ENCODE measurements at regions of chr16 and their contacts with region 1.

Region 1: GRCh38 chr16:30065143-30065850 is at the start of gene ALDOA:
- DNase-seq: peak; percentile 99
- ATAC-seq: peak; percentile 87
- H3K4me3 Mint-ChIP-seq: peak within 1 kb of the TSS; percentile 88
- H3K27ac Mint-ChIP-seq: peak within 1 kb of the TSS; percentile 99
- H3K4me1 Mint-ChIP-seq: peaks cover 31% of the 10 kb centered on the region
- H3K27me3 Mint-ChIP-seq: no peaks in the 10 kb centered on the region
- total RNA-seq, gene ALDOA: 2,482 to 3,644 TPM

Region 2: GRCh38 chr16:29790183-29790952 is 274.9 kb before region 1 on chr16 and contains the start of gene KIF22:
- CTCF ChIA-PET with region 1: no interaction called
- POLR2A ChIA-PET with region 1: no interaction called
- intact Hi-C with region 1: loop called in 1 of 2 experiments (anchors 1 kb)
- DNase-seq: peak; percentile 100
- ATAC-seq: peak; percentile 95
- H3K4me3 Mint-ChIP-seq: peak within 1 kb of the TSS; percentile 91
- H3K27ac Mint-ChIP-seq: peak within 1 kb of the TSS; percentile 97
- H3K4me1 Mint-ChIP-seq: peaks cover 30% of the 10 kb centered on the region
- H3K27me3 Mint-ChIP-seq: no peaks in the 10 kb centered on the region
- total RNA-seq, gene KIF22: 153 to 168 TPM

Region 3: GRCh38 chr16:29862884-29863668 is 202.2 kb before region 1 on chr16 and contains the start of gene CDIPT:
- CTCF ChIA-PET with region 1: no interaction called
- POLR2A ChIA-PET with region 1: no interaction called
- intact Hi-C with region 1: loop called in 1 of 2 experiments (anchors 1 kb)
- DNase-seq: peak; percentile 96
- ATAC-seq: peak; percentile 99
- H3K4me3 Mint-ChIP-seq: peak within 1 kb of the TSS; percentile 90
- H3K27ac Mint-ChIP-seq: peak within 1 kb of the TSS; percentile 98
- H3K4me1 Mint-ChIP-seq: peaks cover 18% of the 10 kb centered on the region
- H3K27me3 Mint-ChIP-seq: no peaks in the 10 kb centered on the region
- total RNA-seq, gene CDIPT: 35.1 to 50.0 TPM

Region 4: GRCh38 chr16:30010844-30011713 is 54.2 kb before region 1 on chr16 and contains the start of gene DOC2A:
- CTCF ChIA-PET with region 1: no interaction called
- POLR2A ChIA-PET with region 1: no interaction called
- intact Hi-C with region 1: no loop called
- DNase-seq: peak; percentile 64
- ATAC-seq: peak; percentile 74
- H3K4me3 Mint-ChIP-seq: peak within 1 kb of the TSS; percentile 61
- H3K27ac Mint-ChIP-seq: no peak within 1 kb of the TSS
- H3K4me1 Mint-ChIP-seq: peaks cover 9% of the 10 kb centered on the region
- H3K27me3 Mint-ChIP-seq: peaks cover 18% of the 10 kb centered on the region
- total RNA-seq, gene DOC2A: 0.69 to 1.3 TPM

Region 5: GRCh38 chr16:30025156-30025555 is 40.1 kb before region 1 on chr16:
- CTCF ChIA-PET with region 1: no interaction called
- POLR2A ChIA-PET with region 1: no interaction called
- intact Hi-C with region 1: no loop called
- DNase-seq: no peak
- ATAC-seq: no peak
- H3K4me3 Mint-ChIP-seq: no peak overlapping the region
- H3K27ac Mint-ChIP-seq: no peak overlapping the region
- H3K4me1 Mint-ChIP-seq: peaks cover 10% of the 10 kb centered on the region
- H3K27me3 Mint-ChIP-seq: peaks cover 33% of the 10 kb centered on the region

Region 6: GRCh38 chr16:30075507-30076275 is 10.4 kb after region 1 on chr16 and contains the start of gene PPP4C:
- CTCF ChIA-PET with region 1: interaction called, 3 read pairs
- POLR2A ChIA-PET with region 1: interaction called, 7 read pairs
- intact Hi-C with region 1: loop called (anchors 1 kb)
- DNase-seq: peak; percentile 96
- ATAC-seq: peak; percentile 82
- H3K4me3 Mint-ChIP-seq: peak within 1 kb of the TSS; percentile 89
- H3K27ac Mint-ChIP-seq: peak within 1 kb of the TSS; percentile 91
- H3K4me1 Mint-ChIP-seq: peaks cover 26% of the 10 kb centered on the region
- H3K27me3 Mint-ChIP-seq: no peaks in the 10 kb centered on the region
- total RNA-seq, gene PPP4C: 106 to 113 TPM

Region 7: GRCh38 chr16:30151091-30151490 is 85.8 kb after region 1 on chr16:
- CTCF ChIA-PET with region 1: no interaction called
- POLR2A ChIA-PET with region 1: no interaction called
- intact Hi-C with region 1: no loop called
- DNase-seq: no peak
- ATAC-seq: no peak
- H3K4me3 Mint-ChIP-seq: no peak overlapping the region
- H3K27ac Mint-ChIP-seq: no peak overlapping the region
- H3K4me1 Mint-ChIP-seq: no peaks in the 10 kb centered on the region
- H3K27me3 Mint-ChIP-seq: no peaks in the 10 kb centered on the region

Region 8: DNA sequence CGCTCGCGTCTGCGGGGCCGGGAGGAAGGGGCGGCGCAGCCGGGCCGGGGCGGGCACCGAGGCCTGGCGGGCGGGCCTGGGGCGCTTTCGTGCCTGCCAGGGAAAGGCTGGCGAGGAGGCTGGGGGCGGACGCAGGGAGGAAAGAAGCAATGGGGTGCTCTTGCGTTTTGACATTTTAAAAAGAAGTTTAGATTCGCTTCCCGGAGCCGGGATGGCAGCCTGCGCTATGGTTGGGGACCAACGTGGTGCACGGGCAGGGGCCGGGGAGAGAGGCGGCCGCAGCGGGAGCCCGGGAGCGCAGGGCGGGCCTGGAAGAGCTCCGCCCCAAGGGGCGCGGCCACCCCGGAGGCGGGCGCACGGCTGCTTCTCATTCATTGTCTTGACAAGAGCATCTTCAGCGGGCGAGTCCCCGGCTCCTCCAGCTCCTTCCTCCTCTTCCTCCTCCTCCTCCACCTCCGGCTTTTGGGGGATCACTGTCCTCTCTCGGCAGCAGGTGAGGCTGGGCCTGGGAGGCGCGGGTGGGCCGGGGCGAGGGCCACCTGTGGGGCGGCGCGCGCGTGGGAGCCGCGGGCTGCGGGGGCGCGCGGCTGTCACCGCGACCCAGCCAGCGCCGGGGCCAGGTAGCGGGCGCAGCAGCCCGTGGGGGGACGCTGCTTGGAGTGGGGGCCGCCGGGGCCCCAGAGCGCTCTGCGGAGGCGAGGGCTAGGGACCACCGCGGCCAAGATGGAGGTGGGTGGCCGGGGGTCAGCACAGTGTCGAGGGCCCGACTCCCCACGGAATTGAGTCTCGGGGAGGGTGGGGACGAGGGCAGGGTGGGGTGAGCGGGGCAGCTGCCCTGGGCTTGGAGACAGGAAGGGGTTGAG is 118.2 kb after region 1 on chr16 and contains the start of gene CORO1A:
- CTCF ChIA-PET with region 1: no interaction called
- POLR2A ChIA-PET with region 1: interaction called, 6 read pairs
- intact Hi-C with region 1: loop called in 1 of 2 experiments (anchors 1 kb)
- DNase-seq: peak; percentile 95
- ATAC-seq: peak; percentile 53
- H3K4me3 Mint-ChIP-seq: peak within 1 kb of the TSS; percentile 91
- H3K27ac Mint-ChIP-seq: peak within 1 kb of the TSS; percentile 99
- H3K4me1 Mint-ChIP-seq: peaks cover 23% of the 10 kb centered on the region
- H3K27me3 Mint-ChIP-seq: no peaks in the 10 kb centered on the region
- total RNA-seq, gene CORO1A: 997 to 1,175 TPM

Region 9: DNA sequence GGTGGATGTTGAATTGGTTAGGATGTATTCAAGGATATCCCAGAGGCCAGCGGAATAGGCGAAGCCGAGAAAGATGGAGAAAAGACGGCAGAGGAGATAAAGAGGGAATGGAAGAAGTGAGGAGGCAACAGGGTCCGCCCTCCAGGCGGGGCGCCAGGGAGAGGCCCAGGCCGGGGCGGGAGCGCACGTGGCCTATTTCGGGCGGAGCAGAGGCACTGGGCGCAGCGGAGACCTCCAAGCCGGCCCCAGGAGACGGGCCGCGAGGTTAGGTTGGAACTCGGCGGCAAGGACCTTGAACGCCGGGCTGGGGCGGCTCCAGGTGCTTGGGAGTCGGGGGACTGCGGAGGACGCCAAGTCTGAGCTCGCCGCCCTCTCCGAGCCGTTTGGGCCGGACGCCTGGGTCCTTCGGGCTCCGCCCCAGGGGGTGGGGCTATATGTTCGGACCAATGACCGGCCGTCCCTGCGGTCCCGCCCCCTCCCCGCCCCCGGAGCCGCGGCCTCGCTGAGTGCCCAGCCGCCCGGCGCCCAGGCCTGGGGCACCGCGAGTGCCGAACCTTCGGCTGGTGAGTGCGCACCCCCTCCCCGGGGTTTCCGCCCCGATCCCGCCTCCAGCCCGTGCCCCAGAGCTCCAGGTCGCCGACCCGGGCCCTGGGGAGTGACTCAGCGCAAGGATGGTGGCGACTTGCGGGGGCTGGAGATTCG is 342.0 kb after region 1 on chr16 and contains the start of gene ZNF771:
- CTCF ChIA-PET with region 1: no interaction called
- POLR2A ChIA-PET with region 1: interaction called, 5 read pairs
- intact Hi-C with region 1: loop called (anchors 2 to 10 kb)
- DNase-seq: peak; percentile 95
- ATAC-seq: peak; percentile 85
- H3K4me3 Mint-ChIP-seq: peak within 1 kb of the TSS; percentile 79
- H3K27ac Mint-ChIP-seq: peak within 1 kb of the TSS; percentile 97
- H3K4me1 Mint-ChIP-seq: peaks cover 26% of the 10 kb centered on the region
- H3K27me3 Mint-ChIP-seq: peaks cover 2% of the 10 kb centered on the region
- total RNA-seq, gene ZNF771: 3.8 to 4.0 TPM

Region 10: GRCh38 chr16:30650369-30651123 is 585.2 kb after region 1 on chr16 and contains the start of gene PRR14:
- CTCF ChIA-PET with region 1: no interaction called
- POLR2A ChIA-PET with region 1: no interaction called
- intact Hi-C with region 1: loop called in 1 of 2 experiments (anchors 1 kb)
- DNase-seq: peak; percentile 100
- ATAC-seq: peak; percentile 82
- H3K4me3 Mint-ChIP-seq: peak within 1 kb of the TSS; percentile 95
- H3K27ac Mint-ChIP-seq: peak within 1 kb of the TSS; percentile 97
- H3K4me1 Mint-ChIP-seq: peaks cover 21% of the 10 kb centered on the region
- H3K27me3 Mint-ChIP-seq: no peaks in the 10 kb centered on the region
- total RNA-seq, gene PRR14: 76.8 to 77.8 TPM

Measured in activated CD4-positive, alpha-beta T cell treated with anti-CD3 and anti-CD28 coated beads for 36 hours (primary cell).